Activated B cell treated with CpG ODN at 0.5 μM for 24 hours (primary cell): ENCODE measurements at regions of chr10 and their contacts with region 1.

Region 1: DNA sequence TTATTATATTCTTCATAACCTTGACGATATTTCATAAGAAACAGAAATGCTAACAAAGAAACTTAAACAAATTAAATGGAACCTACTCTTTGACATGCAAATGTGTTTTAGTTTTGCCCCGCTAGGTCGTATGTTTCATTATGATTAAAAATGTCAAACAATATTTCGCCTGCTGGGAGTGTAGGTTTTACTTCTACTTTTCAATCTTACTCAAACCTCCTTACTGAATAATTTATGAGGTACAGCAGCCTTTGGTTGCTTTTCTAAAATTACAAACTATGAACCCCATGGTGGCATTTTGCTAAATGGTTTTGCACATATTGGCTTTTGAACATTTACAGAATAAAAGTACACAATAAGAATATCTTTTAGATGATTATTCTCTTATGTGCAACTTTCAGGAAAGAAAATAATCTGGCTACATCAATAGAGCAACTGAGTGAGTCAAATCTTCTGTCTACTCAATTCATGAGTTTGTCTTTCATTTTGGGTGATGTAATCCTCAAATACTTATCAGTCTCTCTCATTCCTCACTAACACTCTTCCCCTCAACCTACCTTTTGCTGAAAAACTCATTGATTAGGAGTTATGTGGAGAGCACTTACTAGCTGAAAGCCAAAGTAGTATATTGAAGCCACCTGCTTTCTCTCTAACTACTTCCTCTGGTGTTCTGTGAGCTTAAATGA is 1226.4 kb downstream of the XPNPEP1 start:
- DNase-seq: no peak
- ATAC-seq: peak; percentile 74
- H3K4me3 Mint-ChIP-seq: no peak overlapping the region
- H3K27ac Mint-ChIP-seq: peak overlapping the region; percentile 27
- H3K4me1 Mint-ChIP-seq: peaks cover 15% of the 10 kb centered on the region
- H3K27me3 Mint-ChIP-seq: no peaks in the 10 kb centered on the region
- CTCF ChIP-seq: no peak

Region 2: DNA sequence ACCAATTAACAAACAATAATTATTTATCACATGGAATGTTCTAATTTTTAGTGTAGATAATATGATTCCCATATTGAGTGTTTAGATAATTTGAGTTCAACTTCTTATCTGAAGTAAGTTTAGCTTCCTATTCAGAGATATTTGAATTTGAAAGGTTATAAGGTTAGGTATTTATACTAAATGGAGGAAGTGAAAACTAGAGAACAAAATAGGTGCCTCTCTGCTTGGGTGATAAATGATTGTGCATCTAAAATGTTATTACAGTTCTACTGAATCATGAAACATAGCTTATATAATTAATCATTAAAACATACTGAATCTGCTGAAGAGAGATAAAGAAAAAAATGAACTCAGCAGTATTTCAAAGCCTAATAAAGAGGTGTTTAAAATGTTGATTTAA is 52.1 kb after region 1 on chr10:
- CTCF ChIA-PET with region 1: no interaction called
- POLR2A ChIA-PET with region 1: no interaction called
- intact Hi-C with region 1: loop called (anchors 5 kb)
- DNase-seq: no peak
- ATAC-seq: no peak
- H3K4me3 Mint-ChIP-seq: no peak overlapping the region
- H3K27ac Mint-ChIP-seq: no peak overlapping the region
- H3K4me1 Mint-ChIP-seq: peaks cover 7% of the 10 kb centered on the region
- H3K27me3 Mint-ChIP-seq: no peaks in the 10 kb centered on the region
- CTCF ChIP-seq: no peak

Region 3: DNA sequence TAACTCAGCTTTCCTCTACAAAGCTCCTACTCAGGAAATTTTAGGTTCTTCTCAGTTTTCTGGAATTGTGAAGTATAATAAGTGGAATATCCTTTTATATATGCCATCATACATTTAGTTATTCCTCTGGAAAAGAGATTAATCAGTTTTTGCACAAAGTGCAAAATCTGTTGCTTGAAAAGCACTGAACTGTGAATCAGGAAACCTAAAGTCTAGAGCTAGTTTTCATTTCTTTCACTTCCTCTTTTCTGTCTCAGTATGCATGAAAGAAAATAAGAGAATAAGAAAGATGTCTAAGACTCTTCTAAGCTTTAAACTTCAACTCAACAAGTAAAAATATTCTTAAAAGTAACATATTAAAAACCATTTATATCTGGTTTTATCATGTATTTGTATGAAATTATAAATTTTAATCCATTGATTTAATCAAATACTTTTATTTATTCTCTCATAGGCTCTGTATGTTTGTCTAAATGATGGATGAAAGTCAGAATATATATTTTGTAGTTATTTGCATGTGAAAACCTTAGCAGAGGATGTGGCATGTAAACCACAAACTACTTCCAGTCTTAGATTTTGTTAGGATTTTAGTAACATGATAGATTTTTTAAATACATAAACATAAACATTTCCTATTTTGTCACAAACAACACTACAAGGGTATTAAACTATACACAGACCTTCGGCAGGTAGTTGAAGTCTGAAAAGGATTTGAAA is 153.4 kb after region 1 on chr10:
- CTCF ChIA-PET with region 1: no interaction called
- POLR2A ChIA-PET with region 1: no interaction called
- intact Hi-C with region 1: loop called (anchors 1 kb)
- DNase-seq: no peak
- ATAC-seq: peak; percentile 81
- H3K4me3 Mint-ChIP-seq: peak overlapping the region; percentile 53
- H3K27ac Mint-ChIP-seq: peak overlapping the region; percentile 50
- H3K4me1 Mint-ChIP-seq: peaks cover 40% of the 10 kb centered on the region
- H3K27me3 Mint-ChIP-seq: no peaks in the 10 kb centered on the region
- CTCF ChIP-seq: no peak